ENCODE measurements at regions of chr21 and their contacts with region 1.

Region 1: DNA sequence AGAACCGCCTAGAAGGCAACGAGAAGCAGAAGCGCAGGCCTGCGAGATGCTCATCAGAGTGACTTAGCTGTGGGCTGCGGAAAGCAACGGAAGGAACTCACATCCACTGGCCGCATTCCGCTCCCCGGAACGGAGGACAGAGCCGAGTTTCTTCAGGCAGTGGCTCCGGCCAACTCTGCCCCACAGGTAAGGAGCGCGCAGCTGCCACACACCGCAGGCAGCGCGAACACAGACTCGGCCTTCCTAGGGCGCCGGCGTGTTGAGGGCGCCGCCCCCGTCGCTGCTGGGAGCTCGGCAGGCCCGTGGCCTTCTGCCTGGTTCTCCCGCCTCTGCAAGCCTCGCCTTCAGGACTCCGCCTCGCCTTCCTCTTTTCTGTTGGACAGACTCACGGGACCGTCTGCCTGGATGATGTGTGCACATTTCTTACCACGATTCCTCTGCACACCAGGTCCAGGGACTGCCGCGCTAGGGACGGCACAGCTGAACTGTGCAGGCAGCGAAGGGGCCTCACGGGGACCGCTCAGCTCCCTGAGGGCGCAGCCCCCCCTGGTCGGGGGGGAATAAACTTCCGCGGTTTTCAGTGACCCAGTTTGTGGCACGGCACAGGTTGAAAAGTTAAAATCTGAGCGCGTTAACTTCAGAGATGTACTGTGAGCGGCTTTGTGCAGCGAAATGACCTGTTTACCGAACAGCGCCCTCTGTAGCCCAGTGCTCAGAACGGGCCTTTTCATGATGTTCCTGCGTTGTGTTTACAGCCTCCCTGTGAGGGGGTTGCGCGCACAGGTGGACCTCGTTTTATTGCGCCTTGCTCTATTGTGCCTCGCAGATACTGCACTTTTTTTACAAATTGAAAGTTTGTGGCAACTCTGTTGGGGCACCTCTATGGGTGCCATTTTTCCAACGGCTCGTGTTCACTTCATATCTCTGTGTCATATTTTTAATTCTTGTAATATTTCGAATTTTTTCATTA is 15.8 kb downstream of the TCP10L start:
- DNase-seq: peak; percentile 87
- H3K4me3 Mint-ChIP-seq: peak overlapping the region; percentile 64
- H3K27ac Mint-ChIP-seq: peak overlapping the region; percentile 64
- H3K4me1 Mint-ChIP-seq: peaks cover 14% of the 10 kb centered on the region
- H3K27me3 Mint-ChIP-seq: peaks cover 35% of the 10 kb centered on the region

Region 2: GRCh38 chr21:32403201-32403777 is 166.3 kb before region 1 on chr21:
- CTCF ChIA-PET with region 1: interaction called, 56 read pairs
- DNase-seq: peak; percentile 64
- H3K4me3 Mint-ChIP-seq: no peak overlapping the region
- H3K27ac Mint-ChIP-seq: no peak overlapping the region
- H3K4me1 Mint-ChIP-seq: no peaks in the 10 kb centered on the region
- H3K27me3 Mint-ChIP-seq: peaks cover 29% of the 10 kb centered on the region

Region 3: DNA sequence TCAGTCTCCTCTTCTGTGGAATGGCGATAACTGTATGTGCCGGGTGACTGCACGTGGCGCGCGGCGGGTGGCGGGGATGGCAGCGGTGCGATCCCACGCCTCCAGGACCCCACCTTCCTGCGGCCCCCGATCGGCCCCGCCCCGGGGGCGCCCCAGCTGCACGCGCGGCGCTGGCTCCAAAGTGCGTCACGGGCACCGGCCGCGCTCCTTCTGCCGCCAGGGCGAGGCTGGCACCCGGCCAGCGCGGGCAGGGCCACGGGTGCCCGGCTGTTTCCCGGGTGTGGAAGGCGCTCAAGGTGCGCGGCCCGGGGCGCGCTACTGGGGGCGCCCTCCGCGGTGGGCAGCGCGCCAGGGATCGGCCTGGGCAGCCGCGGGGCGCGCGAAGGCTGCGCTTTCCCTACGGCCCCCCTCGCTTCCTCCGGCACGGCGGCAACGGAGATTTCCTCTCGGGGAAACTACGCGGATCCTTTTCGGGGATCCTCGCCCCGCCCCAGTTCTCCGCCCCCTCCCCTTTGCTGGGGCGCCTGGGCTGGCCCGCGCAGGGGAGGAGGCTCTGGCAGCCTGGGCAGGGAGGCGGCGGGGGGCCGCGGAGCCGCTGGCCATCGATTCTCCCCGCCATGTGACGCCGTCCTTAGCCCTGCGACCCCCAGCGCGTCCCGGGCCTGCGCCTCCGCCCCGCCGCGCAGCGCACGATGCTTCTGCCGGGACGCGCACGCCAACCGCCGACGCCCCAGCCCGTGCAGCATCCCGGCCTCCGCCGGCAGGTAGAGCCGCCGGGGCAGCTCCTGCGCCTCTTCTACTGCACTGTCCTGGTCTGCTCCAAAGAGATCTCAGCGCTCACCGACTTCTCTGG is 157.2 kb before region 1 on chr21 and contains the start of gene EVA1C:
- CTCF ChIA-PET with region 1: interaction called, 12 read pairs
- DNase-seq: peak; percentile 64
- H3K4me3 Mint-ChIP-seq: peak within 1 kb of the TSS; percentile 91
- H3K27ac Mint-ChIP-seq: peak within 1 kb of the TSS; percentile 78
- H3K4me1 Mint-ChIP-seq: peaks cover 25% of the 10 kb centered on the region
- H3K27me3 Mint-ChIP-seq: peaks cover 22% of the 10 kb centered on the region

Region 4: DNA sequence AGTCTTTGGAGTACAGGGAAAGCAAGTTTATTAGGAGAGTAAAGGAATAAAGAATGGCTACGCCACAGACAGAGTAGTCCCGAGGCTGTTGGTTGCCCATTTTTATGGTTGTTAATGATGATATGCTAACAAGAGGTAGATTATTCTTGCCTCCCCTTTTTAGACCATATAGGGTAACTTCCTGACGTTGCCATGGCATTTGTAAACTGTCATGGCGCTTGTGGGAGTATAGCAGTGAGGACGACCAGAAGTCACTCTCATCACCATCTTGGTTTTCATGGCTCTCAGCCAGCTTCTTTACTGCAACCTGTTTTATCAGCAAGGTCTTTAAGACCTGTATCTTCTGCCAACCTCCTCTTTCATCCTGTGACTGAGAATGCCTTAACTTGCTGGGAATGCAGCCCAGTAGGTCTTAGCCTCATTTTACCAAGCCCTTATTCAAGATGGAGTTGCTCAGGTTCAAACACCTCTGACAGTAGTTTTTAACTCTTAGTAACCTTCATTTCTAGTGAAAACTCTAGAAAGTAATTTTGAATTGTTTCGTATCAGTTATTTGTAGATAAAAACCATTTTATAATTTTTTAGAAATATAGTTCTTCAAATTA is 10.4 kb before region 1 on chr21:
- CTCF ChIA-PET with region 1: interaction called, 10 read pairs
- DNase-seq: no peak
- H3K4me3 Mint-ChIP-seq: no peak overlapping the region
- H3K27ac Mint-ChIP-seq: no peak overlapping the region
- H3K4me1 Mint-ChIP-seq: no peaks in the 10 kb centered on the region
- H3K27me3 Mint-ChIP-seq: peaks cover 4% of the 10 kb centered on the region

Region 5: DNA sequence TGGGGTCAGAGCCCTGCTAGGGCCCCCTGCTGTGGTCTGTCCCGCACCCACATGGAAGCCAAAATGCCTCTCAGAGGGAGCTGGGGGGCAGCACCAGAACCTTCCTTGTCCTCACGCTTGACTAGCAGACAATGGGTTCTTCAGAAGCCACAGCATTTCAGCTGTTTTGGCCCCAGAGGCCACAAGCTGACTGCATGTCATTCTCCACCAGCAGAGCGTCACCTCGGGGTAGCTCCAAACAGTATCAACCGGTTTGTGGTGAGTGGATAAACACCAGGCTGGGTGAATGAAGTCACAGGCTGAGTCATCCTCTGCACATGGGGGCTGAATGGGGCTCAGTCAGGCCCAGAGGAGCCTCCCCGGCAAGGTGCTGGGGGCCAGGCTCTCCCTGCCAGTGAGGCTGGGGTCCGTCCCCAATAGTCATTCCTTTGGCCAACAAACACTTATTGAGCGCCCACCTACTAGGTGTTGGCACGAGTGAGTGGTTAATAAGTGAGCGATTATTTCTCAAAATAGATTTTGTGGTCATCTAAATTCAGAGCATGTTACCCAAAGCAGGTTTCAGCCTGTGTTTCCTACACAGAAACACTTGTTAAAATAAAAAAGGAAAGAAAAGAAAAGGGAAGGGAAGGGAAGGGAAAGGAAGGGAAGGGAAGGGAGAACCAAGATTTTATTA is 509.5 kb after region 1 on chr21:
- CTCF ChIA-PET with region 1: no interaction called
- DNase-seq: no peak
- H3K4me3 Mint-ChIP-seq: no peak overlapping the region
- H3K27ac Mint-ChIP-seq: no peak overlapping the region
- H3K4me1 Mint-ChIP-seq: peaks cover 5% of the 10 kb centered on the region
- H3K27me3 Mint-ChIP-seq: peaks cover 55% of the 10 kb centered on the region

Measured in activated naive CD4-positive, alpha-beta T cell treated with anti-CD3 and anti-CD28 coated beads, Interleukin-2, amount 10 ng/mL, durations not matched to agents 7 days and 5 days (primary cell).